Activated CD4-positive, alpha-beta memory T cell treated with anti-CD3 and anti-CD28 coated beads for 36 hours (primary cell): ENCODE measurements at regions of chr18 and their contacts with region 1.

Region 1: DNA sequence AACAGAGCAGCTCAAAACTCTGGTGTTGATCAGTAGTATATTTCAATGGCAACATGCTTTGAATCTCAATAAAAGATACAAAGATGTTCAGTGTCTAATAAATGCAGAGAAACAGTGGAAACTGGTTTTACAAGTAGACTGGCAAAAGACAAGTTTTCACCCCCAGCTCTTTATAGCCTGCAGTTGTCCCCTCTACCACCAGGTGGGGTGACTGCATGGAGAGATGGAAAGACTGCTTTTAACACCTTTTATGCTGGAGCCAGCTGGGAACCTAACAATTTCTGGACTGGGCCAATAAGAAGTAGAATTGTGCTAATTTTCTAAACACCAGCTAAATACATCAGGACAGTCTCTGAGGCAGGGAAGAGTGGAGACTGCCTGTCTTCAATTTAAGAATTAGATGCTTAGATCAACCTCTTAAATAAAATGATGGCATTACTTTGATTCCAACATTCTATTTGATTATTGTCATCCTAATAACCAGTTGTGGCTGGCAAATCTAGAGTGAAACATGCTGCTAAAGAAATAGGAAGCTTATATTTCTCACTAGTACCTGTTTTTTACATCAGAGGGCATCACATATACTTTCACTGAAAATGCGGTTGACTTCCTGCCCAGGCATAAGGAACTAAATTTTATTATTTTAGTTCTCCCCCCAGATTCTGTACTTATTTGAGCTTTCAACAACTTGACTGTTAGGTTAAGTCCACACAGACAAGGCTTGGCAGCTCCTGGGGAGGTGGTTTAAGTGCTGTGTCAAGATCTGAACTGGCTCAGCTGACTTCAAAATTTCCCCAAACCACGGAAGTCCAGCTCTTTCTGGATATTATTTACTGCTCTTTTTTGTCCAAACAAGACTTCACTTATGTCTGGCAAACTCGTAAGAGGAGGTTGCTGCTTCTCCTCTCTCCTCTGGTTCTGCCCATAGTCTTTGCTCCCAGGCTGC is 140.5 kb downstream of the TPGS2 start:
- DNase-seq: peak; percentile 63
- H3K4me3 Mint-ChIP-seq: no peak overlapping the region
- H3K27ac Mint-ChIP-seq: no peak overlapping the region
- H3K4me1 Mint-ChIP-seq: no peaks in the 10 kb centered on the region
- H3K27me3 Mint-ChIP-seq: peaks cover 8% of the 10 kb centered on the region

Region 2: DNA sequence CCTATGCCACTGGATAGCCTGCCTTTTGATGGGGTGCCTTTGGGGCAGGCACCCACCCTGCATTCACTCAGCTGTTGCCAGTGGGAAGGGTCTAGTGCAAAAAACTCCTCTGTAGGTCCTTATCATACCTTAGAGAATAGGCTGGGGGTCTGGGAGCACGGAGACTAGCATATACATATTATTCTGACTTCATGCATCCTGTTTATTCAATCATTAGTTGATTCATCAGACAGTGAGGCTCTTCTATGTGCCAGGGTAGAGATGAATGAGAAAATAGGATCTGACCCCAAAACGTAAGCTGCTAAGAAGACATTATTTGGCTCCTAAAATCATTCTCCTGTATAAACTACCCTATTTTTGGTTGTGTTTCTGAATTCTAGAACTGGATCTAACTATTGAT is 12.8 kb before region 1 on chr18:
- CTCF ChIA-PET with region 1: interaction called, 12 read pairs
- POLR2A ChIA-PET with region 1: no interaction called
- intact Hi-C with region 1: no loop called
- DNase-seq: no peak
- H3K4me3 Mint-ChIP-seq: no peak overlapping the region
- H3K27ac Mint-ChIP-seq: no peak overlapping the region
- H3K4me1 Mint-ChIP-seq: no peaks in the 10 kb centered on the region
- H3K27me3 Mint-ChIP-seq: peaks cover 4% of the 10 kb centered on the region

Region 3: GRCh38 chr18:36711813-36712444 is 23.6 kb after region 1 on chr18:
- CTCF ChIA-PET with region 1: no interaction called
- POLR2A ChIA-PET with region 1: no interaction called
- intact Hi-C with region 1: no loop called
- DNase-seq: no peak
- H3K4me3 Mint-ChIP-seq: no peak overlapping the region
- H3K27ac Mint-ChIP-seq: no peak overlapping the region
- H3K4me1 Mint-ChIP-seq: no peaks in the 10 kb centered on the region
- H3K27me3 Mint-ChIP-seq: peaks cover 9% of the 10 kb centered on the region